ENCODE measurements at regions of chr19 and their contacts with region 1.

Region 1: GRCh38 chr19:51660975-51661600 is 14.5 kb upstream of the SIGLEC14 start:
- DNase-seq: peak; percentile 33
- H3K4me3 ChIP-seq: no peak overlapping the region
- H3K27ac ChIP-seq: no peak overlapping the region
- H3K27me3 ChIP-seq: no peaks in the 10 kb centered on the region
- CTCF ChIP-seq: peak; percentile 75

Region 2: GRCh38 chr19:51422053-51422448 is 239.0 kb before region 1 on chr19:
- CTCF ChIA-PET with region 1: interaction called, 19 read pairs
- POLR2A ChIA-PET with region 1: no interaction called
- DNase-seq: peak; percentile 18
- H3K4me3 ChIP-seq: no peak overlapping the region
- H3K27ac ChIP-seq: no peak overlapping the region
- H3K27me3 ChIP-seq: no peaks in the 10 kb centered on the region
- CTCF ChIP-seq: peak; percentile 98

Region 3: DNA sequence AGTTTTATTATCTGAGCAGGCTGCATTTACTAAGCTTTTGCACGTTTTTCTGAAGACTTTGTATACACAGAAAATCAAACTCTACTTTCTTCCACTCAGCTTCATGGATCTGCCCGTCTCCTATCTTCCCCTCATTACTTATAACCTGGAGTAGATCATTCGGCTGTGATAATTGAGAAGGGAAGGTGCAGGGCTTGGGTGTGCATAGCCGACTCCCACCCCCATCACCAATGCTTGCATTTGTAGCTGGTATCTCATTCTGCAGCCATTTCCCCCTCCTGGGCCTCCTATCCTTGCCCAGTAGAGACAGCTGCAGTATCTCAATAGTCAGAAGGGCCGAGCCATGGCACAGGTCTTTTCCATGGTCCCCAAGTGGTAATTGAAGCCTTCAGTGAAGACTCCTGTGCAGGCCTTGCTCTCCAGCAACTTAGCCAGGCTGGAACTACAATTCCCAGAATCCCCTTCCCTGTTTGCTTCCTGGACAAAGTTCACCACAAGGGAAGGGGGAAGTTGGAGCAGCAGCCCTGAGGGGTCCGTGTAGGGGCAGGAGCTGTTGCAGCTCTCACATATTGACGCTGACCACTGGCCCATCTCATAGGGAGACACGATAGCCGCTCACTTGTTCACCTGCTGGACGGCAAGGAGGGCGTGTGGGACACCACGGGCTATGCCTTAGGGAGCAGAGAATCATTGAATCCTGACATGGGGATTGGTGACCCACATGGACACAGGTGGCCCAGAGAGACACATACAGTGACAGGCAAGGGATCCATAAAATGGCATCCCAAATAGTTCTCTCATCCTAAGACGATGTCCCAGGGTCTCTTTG is 200.7 kb before region 1 on chr19:
- CTCF ChIA-PET with region 1: no interaction called
- POLR2A ChIA-PET with region 1: no interaction called
- DNase-seq: no peak
- H3K4me3 ChIP-seq: no peak overlapping the region
- H3K27ac ChIP-seq: no peak overlapping the region
- H3K27me3 ChIP-seq: no peaks in the 10 kb centered on the region
- CTCF ChIP-seq: no peak

Region 4: GRCh38 chr19:51514866-51515481 is 146.1 kb before region 1 on chr19:
- CTCF ChIA-PET with region 1: interaction called, 13 read pairs
- POLR2A ChIA-PET with region 1: no interaction called
- DNase-seq: peak; percentile 7
- H3K4me3 ChIP-seq: no peak overlapping the region
- H3K27ac ChIP-seq: no peak overlapping the region
- H3K27me3 ChIP-seq: no peaks in the 10 kb centered on the region
- CTCF ChIP-seq: peak; percentile 76

Region 5: DNA sequence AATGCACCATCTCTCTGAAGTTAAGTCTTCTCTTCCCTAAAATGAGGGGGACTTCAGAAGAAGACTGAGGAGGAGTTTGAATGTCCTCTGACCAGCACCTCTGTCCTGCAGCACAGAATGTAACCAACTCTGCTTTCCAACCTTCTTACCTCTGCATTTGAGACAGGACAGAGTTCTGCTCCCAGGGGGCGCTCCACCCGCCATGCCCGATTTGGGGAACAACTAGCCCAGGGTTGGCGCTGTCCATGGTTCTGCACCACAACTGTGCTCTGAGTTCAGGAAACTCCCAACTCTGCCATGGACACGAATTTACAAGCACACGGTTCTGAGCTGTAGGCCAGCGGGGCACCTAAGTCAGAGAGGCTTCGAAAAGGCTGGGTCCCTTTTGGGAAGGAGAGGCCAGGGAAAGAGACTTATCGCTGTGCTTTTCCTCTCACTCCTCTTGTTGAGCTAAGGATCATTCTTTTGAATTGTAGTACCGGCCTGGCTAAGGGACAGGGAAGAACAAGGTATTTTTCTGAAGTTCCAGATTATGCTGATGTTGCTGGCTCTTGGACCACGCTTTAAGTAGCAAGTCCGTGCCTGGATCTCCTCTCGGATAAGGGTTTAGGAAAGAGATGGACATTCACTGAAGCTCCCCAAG is 53.0 kb before region 1 on chr19:
- CTCF ChIA-PET with region 1: interaction called, 23 read pairs
- POLR2A ChIA-PET with region 1: no interaction called
- DNase-seq: peak; percentile 38
- H3K4me3 ChIP-seq: no peak overlapping the region
- H3K27ac ChIP-seq: no peak overlapping the region
- H3K27me3 ChIP-seq: peaks cover 4% of the 10 kb centered on the region
- CTCF ChIP-seq: peak; percentile 84

Region 6: GRCh38 chr19:51681321-51682168 is 20.5 kb after region 1 on chr19:
- CTCF ChIA-PET with region 1: interaction called, 84 read pairs
- POLR2A ChIA-PET with region 1: no interaction called
- DNase-seq: no peak
- H3K4me3 ChIP-seq: no peak overlapping the region
- H3K27ac ChIP-seq: no peak overlapping the region
- H3K27me3 ChIP-seq: no peaks in the 10 kb centered on the region
- CTCF ChIP-seq: no peak

Region 7: DNA sequence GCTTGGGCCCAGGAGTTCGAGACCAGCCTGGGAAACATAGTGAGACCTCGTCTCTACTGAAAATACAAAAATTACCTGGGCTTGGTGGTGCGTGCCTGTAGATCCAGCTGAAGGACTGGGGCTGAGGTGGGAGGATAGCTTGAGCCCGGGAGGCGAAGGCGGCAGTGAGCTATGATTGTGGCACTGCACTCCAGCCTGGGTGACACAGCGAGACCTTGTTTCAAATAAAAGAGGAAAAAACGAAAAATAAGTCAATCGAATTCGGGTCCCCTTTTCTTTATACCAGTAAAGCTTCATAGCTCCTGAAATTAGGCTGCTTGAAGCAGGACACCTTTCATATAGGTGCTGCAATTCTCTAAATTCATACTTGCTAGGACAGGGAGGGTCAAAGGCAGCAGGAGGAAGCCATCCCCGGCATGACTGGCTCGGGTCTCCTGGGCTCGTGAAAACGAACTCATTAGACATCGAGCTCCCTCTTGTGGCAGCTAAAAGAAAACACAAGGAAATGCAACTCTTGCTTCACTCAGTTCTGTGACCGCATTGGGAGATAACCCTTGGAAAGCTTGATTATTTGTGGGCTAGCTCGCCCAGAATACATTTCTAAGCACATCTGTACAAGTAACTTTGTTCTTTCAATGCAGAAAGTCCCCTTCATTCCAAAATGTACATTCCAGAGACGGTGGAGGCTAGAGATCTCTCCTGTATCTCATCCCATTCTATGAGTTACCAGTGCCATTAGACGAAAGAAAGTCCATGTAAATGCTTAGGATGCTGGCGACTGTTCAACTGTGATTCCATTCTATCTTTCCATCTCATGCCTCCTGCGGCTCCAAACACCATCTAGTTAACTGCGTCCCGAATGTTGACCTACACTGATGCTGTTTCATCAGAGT is 116.7 kb after region 1 on chr19:
- CTCF ChIA-PET with region 1: interaction called, 21 read pairs
- POLR2A ChIA-PET with region 1: no interaction called
- DNase-seq: peak; percentile 63
- H3K4me3 ChIP-seq: no peak overlapping the region
- H3K27ac ChIP-seq: no peak overlapping the region
- H3K27me3 ChIP-seq: no peaks in the 10 kb centered on the region
- CTCF ChIP-seq: peak; percentile 76

Measured in AG04450 (cell line).